Activated CD4-positive, alpha-beta T cell treated with anti-CD3 and anti-CD28 coated beads, Interleukin-2, amount 10 ng/mL, durations not matched to agents 24 days and 14 days (primary cell): ENCODE measurements at regions of chr2 and their contacts with region 1.

Region 1: GRCh38 chr2:47520825-47521665 is 118.1 kb downstream of the MSH2 start:
- DNase-seq: peak; percentile 93
- H3K4me3 Mint-ChIP-seq: peak overlapping the region; percentile 90
- H3K27ac Mint-ChIP-seq: peak overlapping the region; percentile 96
- H3K4me1 Mint-ChIP-seq: peaks cover 7% of the 10 kb centered on the region
- H3K27me3 Mint-ChIP-seq: no peaks in the 10 kb centered on the region

Region 2: DNA sequence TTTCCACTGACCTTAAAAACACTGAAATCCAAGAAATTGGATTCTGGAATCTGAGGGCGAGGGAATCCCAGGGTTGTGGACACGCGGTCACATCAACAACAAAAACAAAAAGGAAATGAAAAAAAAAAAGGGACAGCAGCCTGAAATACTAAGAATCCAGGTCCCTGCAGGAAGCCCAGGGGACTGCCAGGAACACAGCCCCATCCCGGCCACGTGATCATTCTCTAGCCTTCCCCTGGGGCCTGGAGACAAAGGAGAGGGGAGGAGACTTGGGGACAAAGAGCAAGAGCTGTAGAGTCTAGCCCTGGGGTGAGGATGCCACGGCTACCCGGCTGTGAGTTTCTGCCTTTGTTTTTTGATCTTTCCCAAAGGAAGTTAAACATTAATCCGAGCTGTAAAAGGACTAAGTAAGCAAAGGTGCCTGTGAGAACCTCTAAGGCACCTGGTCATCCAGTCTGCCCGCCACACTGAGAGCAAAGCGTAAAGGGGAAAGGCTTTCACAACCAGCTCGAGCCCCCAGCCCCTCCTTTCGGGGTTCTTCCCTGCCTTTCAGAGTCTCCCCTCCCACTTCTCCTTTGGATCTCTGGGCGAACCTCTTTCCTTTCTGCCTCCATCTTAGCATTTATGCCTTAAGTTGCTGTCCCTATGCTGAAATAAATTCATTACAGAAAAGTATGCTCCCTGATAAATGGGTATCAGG is 176.0 kb before region 1 on chr2:
- intact Hi-C with region 1: no loop called
- DNase-seq: no peak
- H3K4me3 Mint-ChIP-seq: no peak overlapping the region
- H3K27ac Mint-ChIP-seq: no peak overlapping the region
- H3K4me1 Mint-ChIP-seq: peaks cover 2% of the 10 kb centered on the region
- H3K27me3 Mint-ChIP-seq: peaks cover 27% of the 10 kb centered on the region

Region 3: GRCh38 chr2:47767880-47768609 is 247.0 kb after region 1 on chr2:
- intact Hi-C with region 1: loop called (anchors 5 kb)
- DNase-seq: peak; percentile 92
- H3K4me3 Mint-ChIP-seq: peak overlapping the region; percentile 49
- H3K27ac Mint-ChIP-seq: no peak overlapping the region
- H3K4me1 Mint-ChIP-seq: peaks cover 5% of the 10 kb centered on the region
- H3K27me3 Mint-ChIP-seq: no peaks in the 10 kb centered on the region

Region 4: DNA sequence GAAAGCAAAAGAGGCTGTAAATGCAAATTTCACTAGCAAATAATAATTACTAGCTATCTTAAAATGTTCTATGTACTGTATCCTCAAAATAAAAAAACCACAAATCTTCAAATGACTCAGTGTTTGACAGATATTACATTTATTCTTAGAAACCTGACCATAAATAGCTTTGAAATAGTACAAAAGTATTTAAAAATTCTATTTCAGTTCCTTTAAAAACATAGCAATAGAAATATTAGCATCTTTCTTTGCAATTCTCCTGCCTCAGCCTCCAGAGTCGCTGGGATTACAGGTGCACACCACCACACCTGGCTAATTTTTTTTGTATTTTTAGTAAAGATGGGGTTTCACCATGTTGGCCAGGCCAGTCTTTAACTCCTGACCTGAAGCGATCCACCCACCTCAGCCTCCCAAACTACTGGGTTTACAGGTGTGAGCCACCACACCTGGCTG is 312.5 kb after region 1 on chr2:
- intact Hi-C with region 1: no loop called
- DNase-seq: no peak
- H3K4me3 Mint-ChIP-seq: no peak overlapping the region
- H3K27ac Mint-ChIP-seq: no peak overlapping the region
- H3K4me1 Mint-ChIP-seq: peaks cover 3% of the 10 kb centered on the region
- H3K27me3 Mint-ChIP-seq: no peaks in the 10 kb centered on the region